Left cardiac atrium (tissue), 4 donors: ENCODE measurements at regions of chr18 and their contacts with region 1.

Region 1: GRCh38 chr18:50786864-50787263 is 33.0 kb downstream of the MRO start:
- DNase-seq: no peak
- ATAC-seq: no peak

Region 2: GRCh38 chr18:50507120-50507590 is 279.7 kb before region 1 on chr18:
- intact Hi-C with region 1: loop called (anchors 2 kb)
- DNase-seq: peak; percentile 40
- ATAC-seq: peak; percentile 83 to 91

Region 3: DNA sequence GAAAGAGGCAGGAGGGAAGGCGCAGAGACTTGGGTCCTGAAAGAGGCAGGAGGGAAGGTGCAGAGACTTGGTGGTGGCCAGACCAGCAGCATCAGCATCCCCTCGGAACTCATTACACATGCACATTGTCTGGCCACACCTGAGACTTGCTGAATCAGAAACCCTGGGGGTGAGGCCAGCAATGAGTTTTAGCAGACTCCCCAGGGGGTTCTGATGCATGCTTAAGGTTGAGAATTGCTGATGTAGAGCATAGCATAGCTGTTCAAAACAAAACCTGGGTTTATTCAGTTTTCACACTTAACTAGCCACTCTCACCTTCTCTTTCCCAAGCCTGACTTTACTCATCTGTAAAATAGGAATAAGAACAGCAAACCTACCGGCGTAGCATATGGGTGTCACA is 89.9 kb before region 1 on chr18:
- intact Hi-C with region 1: loop called in 1 of 2 experiments (anchors 10 kb)
- DNase-seq: no peak
- ATAC-seq: no peak

Region 4: DNA sequence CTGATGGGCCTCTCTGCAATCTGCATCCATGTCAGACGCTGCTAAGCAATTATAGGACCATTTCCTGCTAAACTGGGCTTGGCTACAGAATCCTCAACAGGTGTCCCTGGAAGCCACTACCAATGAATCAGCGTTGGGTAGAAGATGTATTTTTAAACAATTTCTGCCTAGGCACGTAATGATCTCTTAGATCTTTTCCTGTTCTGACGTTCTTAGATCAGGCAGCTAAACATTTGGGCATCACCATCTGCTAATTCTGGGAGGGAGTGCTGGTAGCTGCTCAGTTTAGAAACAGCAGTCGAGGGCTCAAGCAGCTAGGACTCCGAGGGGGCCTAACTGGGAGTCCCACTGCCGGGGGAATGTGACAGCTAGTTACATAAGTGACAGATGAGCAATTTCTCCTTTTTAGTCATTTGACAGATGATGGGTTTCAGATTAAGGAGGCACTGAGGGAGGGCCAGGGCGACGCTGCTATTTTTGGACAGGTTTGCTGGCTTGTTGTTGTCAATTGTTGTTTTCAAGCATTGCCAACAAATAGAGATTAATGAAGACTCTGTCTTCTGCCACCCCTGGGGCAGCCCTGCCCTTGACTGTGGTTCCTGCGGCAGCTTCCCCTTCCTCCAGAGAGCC is 59.8 kb before region 1 on chr18:
- intact Hi-C with region 1: no loop called
- DNase-seq: no peak
- ATAC-seq: peak; percentile 38 to 51